H1 (cell line): ENCODE measurements at regions of chr1 and their contacts with region 1.

Region 1: DNA sequence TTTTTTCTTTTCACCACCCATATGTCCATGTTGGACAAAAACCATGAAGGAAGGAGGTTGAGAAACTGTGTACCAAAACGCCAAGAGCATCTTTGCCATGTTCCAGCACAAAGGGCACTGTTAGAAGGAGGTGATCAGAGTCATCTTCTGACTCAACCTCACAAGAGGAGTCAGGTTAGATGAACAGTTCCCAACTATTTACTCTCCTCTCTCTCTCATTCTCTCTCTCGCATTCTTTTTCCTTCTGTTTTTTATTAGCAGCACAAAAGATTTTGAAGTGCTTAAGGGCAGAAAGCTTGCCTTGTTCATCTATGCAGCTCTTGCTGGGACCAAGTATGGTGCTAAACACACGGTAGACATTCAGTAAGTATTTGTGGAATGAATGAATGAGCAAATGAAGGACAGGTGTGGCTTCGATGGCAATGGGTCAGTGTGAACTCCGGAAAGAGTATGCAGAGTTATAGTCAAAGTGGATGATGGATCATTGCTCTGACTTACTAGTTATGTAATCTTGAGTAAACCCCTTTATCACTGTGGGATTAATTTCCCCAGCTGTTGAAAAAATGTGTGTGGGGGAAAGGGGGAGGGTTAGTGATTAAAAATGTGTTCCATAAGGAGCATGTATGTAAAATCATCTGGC is 33.9 kb downstream of the DDR2 start:
- DNase-seq: no peak
- H3K4me3 ChIP-seq: no peak overlapping the region
- H3K27ac ChIP-seq: no peak overlapping the region
- H3K4me1 ChIP-seq: peaks cover 0 to 3% (median 1%) of the 10 kb centered on the region in 4 experiments; a peak in 1 of 7 replicates
- H3K27me3 ChIP-seq: no peaks in the 10 kb centered on the region
- CTCF ChIP-seq: no peak
- EP300 ChIP-seq: no peak
- POLR2A ChIP-seq: no peak
- RAD21 ChIP-seq: no peak

Region 2: GRCh38 chr1:162625679-162626078 is 40.4 kb before region 1 on chr1:
- CTCF ChIA-PET with region 1: no interaction called
- POLR2A ChIA-PET with region 1: no interaction called
- DNase-seq: no peak
- H3K4me3 ChIP-seq: no peak overlapping the region
- H3K27ac ChIP-seq: no peak overlapping the region
- H3K4me1 ChIP-seq: no peaks in the 10 kb centered on the region
- H3K27me3 ChIP-seq: no peaks in the 10 kb centered on the region
- CTCF ChIP-seq: no peak
- EP300 ChIP-seq: no peak
- POLR2A ChIP-seq: no peak
- RAD21 ChIP-seq: no peak

Region 3: DNA sequence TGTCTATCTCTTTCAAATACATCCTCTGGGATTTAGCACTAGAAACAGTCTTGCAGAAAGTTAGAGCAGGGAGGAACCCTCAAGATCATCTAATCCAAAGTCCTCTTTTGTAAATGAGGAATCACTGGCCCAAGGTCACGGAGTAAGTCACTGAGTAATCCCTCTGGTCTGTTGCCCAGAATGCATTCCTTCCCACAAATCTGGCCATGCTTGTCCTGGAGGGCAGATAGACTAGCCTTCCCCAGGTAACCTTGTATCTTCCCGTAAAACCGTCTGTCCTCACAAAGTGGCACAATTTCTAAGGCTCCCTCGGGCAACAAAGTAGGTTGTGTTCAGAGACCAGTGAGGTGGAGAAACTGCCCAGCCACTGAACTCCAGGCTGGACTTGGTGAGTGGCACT is 12.3 kb after region 1 on chr1:
- CTCF ChIA-PET with region 1: interaction called, 17 read pairs
- POLR2A ChIA-PET with region 1: no interaction called
- DNase-seq: no peak
- H3K4me3 ChIP-seq: no peak overlapping the region
- H3K27ac ChIP-seq: no peak overlapping the region
- H3K4me1 ChIP-seq: no peaks in the 10 kb centered on the region
- H3K27me3 ChIP-seq: no peaks in the 10 kb centered on the region
- CTCF ChIP-seq: no peak
- EP300 ChIP-seq: no peak
- POLR2A ChIP-seq: no peak
- RAD21 ChIP-seq: no peak